B cell (primary cell): ENCODE measurements at regions of chr9 and their contacts with region 1.

Region 1: GRCh38 chr9:100598641-100599145 is 20.8 kb downstream of the CAVIN4 start:
- DNase-seq: peak; percentile 85
- ATAC-seq: peak; percentile 87
- H3K4me3 ChIP-seq: peak overlapping the region; percentile 49 to 79 (median 61)
- H3K4me3 Mint-ChIP-seq: peak overlapping the region; percentile 76
- H3K27ac ChIP-seq: peak overlapping the region in 1 of 2 donors; percentile 17
- H3K27ac Mint-ChIP-seq: peak overlapping the region; percentile 4
- H3K4me1 ChIP-seq: peaks cover 11 to 13% of the 10 kb centered on the region in 2 donors
- H3K4me1 Mint-ChIP-seq: peaks cover 23% of the 10 kb centered on the region
- H3K27me3 ChIP-seq: no peaks in the 10 kb centered on the region
- H3K27me3 Mint-ChIP-seq: no peaks in the 10 kb centered on the region
- CTCF ChIP-seq: no peak

Region 2: GRCh38 chr9:98974994-98975712 is 1623.5 kb before region 1 on chr9:
- CTCF ChIA-PET with region 1: no interaction called
- POLR2A ChIA-PET with region 1: no interaction called
- intact Hi-C with region 1: loop called (anchors 2 kb)
- DNase-seq: peak; percentile 82
- ATAC-seq: peak; percentile 99
- H3K4me3 ChIP-seq: peak overlapping the region in 4 of 5 experiments; percentile 3 to 47 (median 24)
- H3K4me3 Mint-ChIP-seq: peak overlapping the region; percentile 52
- H3K27ac ChIP-seq: no peak overlapping the region
- H3K27ac Mint-ChIP-seq: no peak overlapping the region
- H3K4me1 ChIP-seq: peaks cover 4 to 10% of the 10 kb centered on the region in 2 donors
- H3K4me1 Mint-ChIP-seq: peaks cover 6% of the 10 kb centered on the region
- H3K27me3 ChIP-seq: peaks cover 0 to 21% (median 10%) of the 10 kb centered on the region in 4 experiments
- H3K27me3 Mint-ChIP-seq: peaks cover 20% of the 10 kb centered on the region
- CTCF ChIP-seq: peak; percentile 97

Region 3: GRCh38 chr9:100028201-100028784 is 570.4 kb before region 1 on chr9:
- CTCF ChIA-PET with region 1: no interaction called
- POLR2A ChIA-PET with region 1: no interaction called
- intact Hi-C with region 1: loop called (anchors 5 kb)
- DNase-seq: peak; percentile 83
- ATAC-seq: peak; percentile 99
- H3K4me3 ChIP-seq: no peak overlapping the region
- H3K4me3 Mint-ChIP-seq: no peak overlapping the region
- H3K27ac ChIP-seq: no peak overlapping the region
- H3K27ac Mint-ChIP-seq: peak overlapping the region; percentile 3
- H3K4me1 ChIP-seq: peaks cover 16% of the 10 kb centered on the region in 2 donors
- H3K4me1 Mint-ChIP-seq: peaks cover 26% of the 10 kb centered on the region
- H3K27me3 ChIP-seq: no peaks in the 10 kb centered on the region
- H3K27me3 Mint-ChIP-seq: no peaks in the 10 kb centered on the region
- CTCF ChIP-seq: peak; percentile 99

Region 4: DNA sequence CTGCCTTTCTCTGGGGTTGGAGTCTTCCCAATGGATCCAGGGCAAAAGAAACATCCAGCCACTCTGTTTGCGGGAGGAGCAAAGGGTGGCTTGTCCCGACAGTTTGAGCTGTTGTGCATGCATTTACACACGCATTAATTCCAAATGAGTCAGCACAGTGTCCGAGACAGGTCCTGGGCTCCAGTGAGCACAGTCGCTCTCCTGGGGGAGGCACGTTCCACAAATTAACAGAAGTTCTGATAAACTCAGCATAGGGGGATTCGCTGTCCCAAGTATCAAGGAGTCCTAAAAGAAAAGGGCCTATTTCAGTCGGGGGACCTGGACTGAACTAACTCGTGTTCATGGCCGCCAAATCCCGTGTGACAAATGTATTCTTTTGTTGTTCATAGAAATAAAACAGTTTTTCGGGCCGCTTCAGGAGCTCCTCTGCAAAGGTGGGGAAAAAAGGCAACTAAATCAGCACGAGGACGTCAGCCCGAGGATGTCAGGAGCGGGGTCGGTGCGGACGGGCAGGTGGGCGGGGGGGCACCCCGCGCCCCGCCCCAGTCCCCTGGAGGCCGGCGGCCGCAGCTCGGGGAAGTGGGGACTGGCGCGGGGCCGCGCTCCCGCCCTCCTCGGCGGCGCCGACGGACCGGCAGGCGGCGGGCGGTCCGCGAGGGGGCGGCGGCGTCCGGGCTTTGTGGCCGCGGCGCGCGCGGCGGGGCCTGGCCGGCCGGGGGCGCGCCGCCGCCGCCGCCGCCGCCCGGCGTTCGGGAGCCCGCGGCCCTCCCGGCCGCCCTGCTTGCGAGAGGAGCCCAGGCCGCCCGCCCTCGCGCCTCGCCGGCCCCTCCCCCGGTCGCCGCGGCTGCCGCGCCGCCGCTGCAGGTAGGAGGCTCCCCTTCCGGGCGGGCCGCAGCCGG is 171.9 kb before region 1 on chr9 and contains the start of gene MSANTD3:
- CTCF ChIA-PET with region 1: no interaction called
- POLR2A ChIA-PET with region 1: no interaction called
- intact Hi-C with region 1: loop called (anchors 5 kb)
- DNase-seq: peak; percentile 75
- ATAC-seq: peak; percentile 90
- H3K4me3 ChIP-seq: peak within 1 kb of the TSS; percentile 40 to 77 (median 70)
- H3K4me3 Mint-ChIP-seq: peak within 1 kb of the TSS; percentile 95
- H3K27ac ChIP-seq: peak within 1 kb of the TSS in 1 of 2 donors; percentile 59
- H3K27ac Mint-ChIP-seq: peak within 1 kb of the TSS; percentile 93
- H3K4me1 ChIP-seq: peaks cover 13 to 16% of the 10 kb centered on the region in 2 donors
- H3K4me1 Mint-ChIP-seq: peaks cover 21% of the 10 kb centered on the region
- H3K27me3 ChIP-seq: peaks cover 0 to 2% (median 0%) of the 10 kb centered on the region in 4 experiments
- H3K27me3 Mint-ChIP-seq: peaks cover 2% of the 10 kb centered on the region
- CTCF ChIP-seq: no peak
- total RNA-seq, gene MSANTD3: 12.1 and 13.8 TPM in 2 replicates

Region 5: GRCh38 chr9:100540327-100540726 is 58.4 kb before region 1 on chr9:
- CTCF ChIA-PET with region 1: no interaction called
- POLR2A ChIA-PET with region 1: no interaction called
- intact Hi-C with region 1: no loop called
- DNase-seq: no peak
- ATAC-seq: no peak
- H3K4me3 ChIP-seq: no peak overlapping the region
- H3K4me3 Mint-ChIP-seq: no peak overlapping the region
- H3K27ac ChIP-seq: no peak overlapping the region
- H3K27ac Mint-ChIP-seq: no peak overlapping the region
- H3K4me1 ChIP-seq: no peaks in the 10 kb centered on the region
- H3K4me1 Mint-ChIP-seq: no peaks in the 10 kb centered on the region
- H3K27me3 ChIP-seq: no peaks in the 10 kb centered on the region
- H3K27me3 Mint-ChIP-seq: no peaks in the 10 kb centered on the region
- CTCF ChIP-seq: no peak

Region 6: DNA sequence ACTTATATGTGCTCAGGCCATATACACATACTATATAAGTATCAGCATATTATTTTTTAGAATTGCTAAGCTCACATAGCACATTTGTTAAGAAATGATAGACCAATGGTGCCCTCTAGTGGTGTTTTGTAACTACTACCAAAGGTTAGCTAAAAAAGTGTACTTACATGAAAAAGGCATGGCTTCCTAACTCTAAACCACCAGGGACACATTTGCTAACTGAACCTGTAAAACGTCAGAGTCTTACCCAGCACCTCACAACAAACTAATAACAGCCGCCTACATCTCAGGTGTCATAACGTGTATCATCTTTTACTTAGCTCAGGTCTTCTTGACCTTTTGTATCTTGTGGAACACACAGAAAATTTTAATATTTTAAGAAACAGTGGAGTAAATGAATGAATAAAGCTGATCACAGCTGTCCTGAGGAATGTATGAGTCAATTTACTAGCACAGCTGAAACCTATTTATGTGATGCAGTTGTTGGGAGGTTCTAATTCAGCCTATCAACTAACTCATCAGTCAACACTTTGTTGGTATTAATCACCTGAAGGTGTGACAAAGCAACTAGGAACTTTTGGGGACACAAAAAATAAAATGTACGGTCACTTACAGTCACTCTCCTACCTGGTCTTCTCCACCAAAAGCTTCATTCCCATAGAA is 713.2 kb after region 1 on chr9:
- CTCF ChIA-PET with region 1: interaction called, 10 read pairs
- POLR2A ChIA-PET with region 1: no interaction called
- intact Hi-C with region 1: loop called (anchors 5 kb)
- DNase-seq: peak; percentile 70
- ATAC-seq: peak; percentile 54
- H3K4me3 ChIP-seq: no peak overlapping the region
- H3K4me3 Mint-ChIP-seq: no peak overlapping the region
- H3K27ac ChIP-seq: no peak overlapping the region
- H3K27ac Mint-ChIP-seq: no peak overlapping the region
- H3K4me1 ChIP-seq: no peaks in the 10 kb centered on the region
- H3K4me1 Mint-ChIP-seq: no peaks in the 10 kb centered on the region
- H3K27me3 ChIP-seq: peaks cover 0 to 4% (median 0%) of the 10 kb centered on the region in 4 experiments
- H3K27me3 Mint-ChIP-seq: peaks cover 3% of the 10 kb centered on the region
- CTCF ChIP-seq: peak; percentile 93